SK-N-SH (cell line): ENCODE measurements at regions of chr12 and their contacts with region 1.

Region 1: DNA sequence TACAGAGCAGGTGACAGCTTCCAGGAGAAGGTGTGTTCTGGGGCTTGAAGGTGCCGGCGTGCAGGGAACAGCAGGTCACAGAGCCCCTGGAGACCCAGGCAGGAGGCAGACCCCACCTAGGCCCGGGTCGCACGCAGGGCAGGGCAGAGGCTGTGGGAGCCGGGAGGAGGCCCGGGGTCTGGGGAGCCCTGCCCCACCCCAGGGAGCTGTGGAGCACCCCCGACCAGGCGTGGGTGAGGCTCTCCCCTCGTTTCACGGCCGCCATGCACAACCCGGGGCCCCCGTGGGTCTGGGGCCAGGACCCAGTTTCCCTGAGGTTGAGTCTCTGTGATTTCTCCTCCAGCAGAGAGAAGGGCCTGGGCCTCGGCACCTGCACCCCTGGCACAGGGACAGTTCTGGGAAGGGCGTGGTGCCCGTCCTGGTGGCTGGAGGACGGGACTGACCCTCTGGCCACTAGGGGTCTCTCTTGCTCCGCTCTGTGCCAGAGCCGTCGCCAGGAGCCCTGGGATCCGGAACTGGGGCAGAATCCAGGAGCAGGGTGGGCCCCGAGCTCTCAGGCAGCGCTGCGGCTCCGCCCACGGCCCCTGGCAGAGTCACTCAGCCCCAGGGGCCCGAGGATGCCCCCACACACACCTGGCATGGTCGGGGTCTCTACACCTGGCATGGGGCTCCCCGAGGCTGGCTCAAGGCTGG is 75.2 kb upstream of the FBRSL1 start:
- DNase-seq: peak; percentile 96
- H3K4me3 ChIP-seq: peak overlapping the region in 1 of 2 experiments; percentile 37; a peak in 1 of 4 replicates
- H3K27ac ChIP-seq: no peak overlapping the region
- H3K4me1 ChIP-seq: no peaks in the 10 kb centered on the region; a peak in 1 of 4 replicates
- H3K27me3 ChIP-seq: peaks cover 36% of the 10 kb centered on the region
- CTCF ChIP-seq: peak; percentile 91
- EP300 ChIP-seq: no peak
- RAD21 ChIP-seq: peak; percentile 92

Region 2: GRCh38 chr12:132114667-132115066 is 300.1 kb before region 1 on chr12:
- CTCF ChIA-PET with region 1: interaction called, 11 read pairs
- POLR2A ChIA-PET with region 1: no interaction called
- DNase-seq: no peak
- H3K4me3 ChIP-seq: no peak overlapping the region
- H3K27ac ChIP-seq: no peak overlapping the region
- H3K4me1 ChIP-seq: no peaks in the 10 kb centered on the region
- H3K27me3 ChIP-seq: no peaks in the 10 kb centered on the region
- CTCF ChIP-seq: no peak
- EP300 ChIP-seq: no peak
- RAD21 ChIP-seq: no peak

Region 3: DNA sequence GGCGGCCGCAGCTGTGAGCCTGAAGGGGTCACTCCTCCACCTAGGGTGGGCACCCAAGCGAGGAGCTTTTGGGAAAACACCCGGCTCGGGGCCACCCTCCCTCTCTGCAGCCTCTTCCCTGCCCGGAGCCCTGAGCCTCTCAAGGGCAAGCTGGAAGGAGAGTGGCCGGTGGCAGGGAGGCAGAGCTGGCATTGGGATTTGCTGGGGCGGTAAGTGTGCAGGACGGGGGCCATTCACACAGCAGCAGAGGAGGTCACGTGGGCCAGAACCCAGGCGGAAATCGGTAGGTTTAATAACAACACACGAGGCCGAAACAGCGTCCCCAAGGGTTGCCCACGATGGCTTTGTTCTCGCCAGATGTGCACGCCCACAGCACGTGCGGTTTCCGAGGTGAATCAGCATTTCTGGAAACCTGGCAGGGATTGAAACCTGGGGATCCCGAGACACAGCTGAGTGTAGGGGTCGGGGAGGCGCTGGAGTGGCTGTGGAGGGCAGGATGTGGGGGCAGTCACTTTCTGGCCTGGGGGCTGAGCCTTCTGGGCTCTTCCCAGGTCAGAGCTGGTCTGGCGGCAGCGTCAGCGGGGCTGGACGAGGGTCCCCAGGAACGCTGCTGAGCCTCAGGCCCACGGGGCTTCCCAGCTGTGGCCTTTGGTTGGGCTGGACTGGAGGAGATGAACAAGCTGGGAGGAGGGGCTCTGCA is 247.0 kb before region 1 on chr12:
- CTCF ChIA-PET with region 1: interaction called, 33 read pairs
- POLR2A ChIA-PET with region 1: no interaction called
- DNase-seq: no peak
- H3K4me3 ChIP-seq: no peak overlapping the region
- H3K27ac ChIP-seq: no peak overlapping the region
- H3K4me1 ChIP-seq: peaks cover 2 to 7% of the 10 kb centered on the region in 2 experiments; a peak in 2 of 4 replicates
- H3K27me3 ChIP-seq: peaks cover 71% of the 10 kb centered on the region
- CTCF ChIP-seq: no peak
- EP300 ChIP-seq: no peak
- RAD21 ChIP-seq: no peak

Region 4: DNA sequence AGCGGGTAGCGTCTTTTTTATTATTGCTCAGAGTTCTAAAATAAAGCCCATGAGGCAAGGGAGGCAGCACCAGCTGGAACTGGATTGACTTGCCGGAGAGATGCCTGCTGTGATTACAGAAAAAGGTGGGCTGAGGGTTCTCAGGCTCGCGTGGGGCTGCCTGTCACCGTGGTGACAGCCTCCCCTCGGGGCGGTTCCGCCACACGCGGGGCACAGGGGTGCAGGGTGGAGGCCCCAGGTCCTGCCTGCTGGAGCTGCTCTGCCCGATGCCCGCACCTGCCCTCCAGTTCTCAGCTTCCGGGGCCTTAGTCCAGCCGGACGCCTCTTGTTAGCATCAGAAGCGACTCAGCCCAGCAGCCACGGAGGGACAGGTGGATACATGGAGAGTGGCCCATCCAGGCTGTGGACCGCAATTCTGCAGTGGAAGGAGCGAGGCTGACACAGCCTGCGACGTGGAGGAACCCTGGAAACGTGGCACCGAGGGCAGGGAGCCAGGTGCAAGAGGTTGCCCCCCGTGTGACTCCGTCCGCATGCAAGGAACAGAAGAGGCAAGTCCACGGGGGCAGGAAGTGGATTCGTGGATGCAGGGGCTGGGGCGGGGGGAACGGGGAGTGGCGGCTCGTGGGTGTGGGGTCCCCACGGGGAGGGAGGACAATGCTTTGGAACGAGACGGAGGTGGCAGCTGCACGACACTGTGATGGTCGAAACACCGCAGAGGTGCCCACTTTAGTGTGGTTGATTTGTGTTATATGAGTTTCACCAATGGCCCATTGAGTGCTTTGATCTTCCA is 164.9 kb before region 1 on chr12:
- CTCF ChIA-PET with region 1: no interaction called
- POLR2A ChIA-PET with region 1: no interaction called
- DNase-seq: no peak
- H3K4me3 ChIP-seq: no peak overlapping the region
- H3K27ac ChIP-seq: no peak overlapping the region
- H3K4me1 ChIP-seq: no peaks in the 10 kb centered on the region
- H3K27me3 ChIP-seq: peaks cover 84% of the 10 kb centered on the region
- CTCF ChIP-seq: no peak
- EP300 ChIP-seq: no peak
- RAD21 ChIP-seq: no peak

Region 5: GRCh38 chr12:132429946-132430643 is 15.3 kb after region 1 on chr12:
- CTCF ChIA-PET with region 1: interaction called, 43 read pairs
- POLR2A ChIA-PET with region 1: no interaction called
- DNase-seq: no peak
- H3K4me3 ChIP-seq: no peak overlapping the region
- H3K27ac ChIP-seq: no peak overlapping the region
- H3K4me1 ChIP-seq: peaks cover 0 to 9% of the 10 kb centered on the region in 2 experiments; a peak in 1 of 4 replicates
- H3K27me3 ChIP-seq: no peaks in the 10 kb centered on the region; the same call in none of the 2 replicates
- CTCF ChIP-seq: no peak
- EP300 ChIP-seq: no peak
- RAD21 ChIP-seq: no peak

Region 6: DNA sequence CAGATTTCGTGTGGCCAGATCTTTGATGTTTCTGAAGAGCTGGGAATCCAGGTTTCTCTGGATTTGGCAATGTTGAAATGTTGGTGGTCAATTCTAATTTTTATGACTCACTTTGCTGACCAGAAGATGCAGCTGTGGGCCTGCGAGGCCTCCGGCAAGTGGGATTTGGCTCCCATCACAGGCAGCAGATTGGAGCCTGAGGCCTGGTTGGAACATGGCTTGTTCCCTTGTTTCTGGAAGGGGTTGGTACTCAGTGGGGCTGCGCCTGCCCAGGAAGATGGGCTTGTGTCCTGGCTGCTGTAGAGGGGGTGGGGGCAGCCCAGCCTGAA is 98.3 kb after region 1 on chr12:
- CTCF ChIA-PET with region 1: interaction called, 15 read pairs
- POLR2A ChIA-PET with region 1: no interaction called
- DNase-seq: no peak
- H3K4me3 ChIP-seq: no peak overlapping the region
- H3K27ac ChIP-seq: no peak overlapping the region
- H3K4me1 ChIP-seq: no peaks in the 10 kb centered on the region; a peak in 1 of 4 replicates
- H3K27me3 ChIP-seq: no peaks in the 10 kb centered on the region
- CTCF ChIP-seq: no peak
- EP300 ChIP-seq: no peak
- RAD21 ChIP-seq: no peak

Region 7: DNA sequence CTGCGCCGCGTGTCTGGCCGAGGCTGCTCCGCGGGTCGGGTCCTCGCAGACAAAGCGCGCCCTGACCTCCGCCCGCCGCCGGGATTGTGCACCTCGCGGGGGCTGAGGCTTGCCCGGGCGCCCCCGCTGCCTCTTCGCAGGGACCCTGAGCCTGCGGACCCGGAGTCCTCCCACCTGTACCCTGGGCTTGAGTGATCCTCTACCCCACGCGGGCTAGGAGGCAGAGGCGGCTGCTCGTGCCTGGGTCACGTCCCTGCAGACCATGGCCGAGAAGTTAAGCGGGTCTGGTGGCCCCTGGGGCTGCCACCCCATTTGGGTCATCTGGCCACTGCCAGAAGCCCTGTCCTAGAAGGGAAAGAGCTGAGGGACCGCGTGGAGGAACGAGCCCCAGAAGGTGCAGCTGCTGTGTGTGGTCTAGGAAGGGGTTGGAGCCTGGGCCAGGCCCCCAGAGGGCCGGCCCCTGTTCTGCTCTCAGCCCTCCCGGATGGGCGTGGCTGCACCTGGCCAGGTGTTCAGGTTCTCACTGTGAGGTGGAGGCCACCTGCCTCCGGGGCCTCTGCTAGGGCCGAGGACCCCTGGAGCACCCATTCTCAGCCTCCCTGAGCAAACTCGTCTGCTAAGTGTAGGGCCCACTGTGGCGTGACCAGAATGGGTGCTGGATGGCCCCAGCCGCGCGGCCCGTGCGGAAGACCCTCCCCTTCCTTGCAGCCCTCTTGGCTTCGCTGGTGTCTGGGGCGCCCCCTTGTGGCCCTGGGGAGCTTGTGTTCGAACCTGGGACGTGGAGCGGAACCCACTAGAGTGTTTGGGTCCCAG is 146.0 kb after region 1 on chr12:
- CTCF ChIA-PET with region 1: interaction called, 80 read pairs
- POLR2A ChIA-PET with region 1: interaction called, 3 read pairs
- DNase-seq: peak; percentile 96
- H3K4me3 ChIP-seq: peak overlapping the region; percentile 68 to 80
- H3K27ac ChIP-seq: peak overlapping the region in 1 of 2 experiments; percentile 63; a peak in 2 of 4 replicates
- H3K4me1 ChIP-seq: peaks cover 0 to 11% of the 10 kb centered on the region in 2 experiments; a peak in 1 of 4 replicates
- H3K27me3 ChIP-seq: no peaks in the 10 kb centered on the region
- CTCF ChIP-seq: peak; percentile 83
- EP300 ChIP-seq: no peak
- RAD21 ChIP-seq: peak; percentile 56

Region 8: DNA sequence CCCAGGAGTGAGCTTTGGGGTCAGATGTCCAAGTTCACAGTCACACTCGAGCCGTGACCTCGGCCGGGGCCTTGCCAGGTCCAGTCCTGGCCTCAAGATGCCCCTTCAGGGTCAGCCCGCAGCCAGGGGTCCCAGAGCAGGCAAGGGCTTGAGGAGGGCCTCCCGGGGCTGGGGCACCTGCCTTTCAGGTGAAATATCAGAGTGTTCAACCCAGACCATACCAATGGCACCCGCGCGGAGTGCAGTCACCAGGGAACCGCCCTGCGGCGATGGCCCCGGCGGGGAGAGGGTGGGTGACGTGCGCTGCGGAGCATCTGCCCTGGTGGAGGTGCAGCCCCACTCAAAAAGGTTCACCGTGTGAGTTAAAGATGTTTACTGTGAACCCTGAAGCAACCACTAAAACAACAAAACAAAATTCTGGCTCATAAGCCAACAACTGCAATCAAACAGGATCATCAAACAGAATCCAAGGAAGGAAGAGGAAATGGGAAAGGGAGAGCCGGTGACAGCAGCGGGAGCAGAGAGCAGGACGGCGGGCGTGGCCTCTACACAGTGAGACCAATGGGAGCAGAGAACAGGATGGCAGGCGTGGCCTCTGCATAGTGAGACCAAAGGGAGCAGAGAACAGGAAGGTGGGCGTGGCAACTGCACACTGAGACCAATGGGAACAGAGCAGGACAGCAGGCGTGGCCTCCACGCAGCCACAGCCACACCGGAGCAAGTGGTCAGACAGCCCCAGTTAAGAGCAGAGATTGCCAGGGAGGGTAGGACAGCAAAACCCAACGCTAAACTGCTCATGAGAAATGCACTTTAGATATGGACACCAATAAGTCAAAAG is 179.0 kb after region 1 on chr12:
- CTCF ChIA-PET with region 1: interaction called, 11 read pairs
- POLR2A ChIA-PET with region 1: no interaction called
- DNase-seq: peak; percentile 93
- H3K4me3 ChIP-seq: peak overlapping the region; percentile 42 to 53
- H3K27ac ChIP-seq: peak overlapping the region in 1 of 2 experiments; percentile 18; a peak in 1 of 4 replicates
- H3K4me1 ChIP-seq: peaks cover 0 to 7% of the 10 kb centered on the region in 2 experiments; a peak in 1 of 4 replicates
- H3K27me3 ChIP-seq: no peaks in the 10 kb centered on the region
- CTCF ChIP-seq: no peak
- EP300 ChIP-seq: no peak
- RAD21 ChIP-seq: no peak

Region 9: DNA sequence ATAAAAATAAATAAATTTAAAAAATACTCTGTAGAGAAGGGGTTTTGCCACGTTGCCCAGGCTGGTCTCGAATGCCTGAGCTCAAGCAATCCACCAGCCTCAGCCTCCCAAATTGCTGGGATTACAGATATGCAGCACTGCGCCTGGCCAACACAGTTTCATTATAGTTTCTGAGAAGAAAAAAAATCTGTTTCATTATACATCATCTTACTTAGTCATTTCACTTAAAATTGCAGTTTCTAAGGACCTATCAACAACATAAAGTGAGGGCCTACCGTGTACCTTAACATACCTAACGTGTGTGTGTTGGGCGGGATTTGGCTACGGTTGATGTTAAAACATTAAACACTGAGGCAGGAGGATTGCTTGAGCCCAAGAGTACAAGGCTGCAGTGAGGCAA is 232.1 kb after region 1 on chr12:
- CTCF ChIA-PET with region 1: no interaction called
- POLR2A ChIA-PET with region 1: no interaction called
- DNase-seq: no peak
- H3K4me3 ChIP-seq: no peak overlapping the region
- H3K27ac ChIP-seq: no peak overlapping the region
- H3K4me1 ChIP-seq: no peaks in the 10 kb centered on the region
- H3K27me3 ChIP-seq: no peaks in the 10 kb centered on the region
- CTCF ChIP-seq: no peak
- EP300 ChIP-seq: no peak
- RAD21 ChIP-seq: no peak